Activated CD8-positive, alpha-beta memory T cell treated with anti-CD3 and anti-CD28 coated beads, Interleukin-2, amount 10 ng/mL, durations not matched to agents 7 days and 5 days (primary cell): ENCODE measurements at regions of chr19 and their contacts with region 1.

Region 1: GRCh38 chr19:4791170-4792018 is at the start of gene FEM1A:
- DNase-seq: peak; percentile 99
- ATAC-seq: peak; percentile 97
- H3K4me3 Mint-ChIP-seq: peak within 1 kb of the TSS; percentile 82
- H3K27ac Mint-ChIP-seq: peak within 1 kb of the TSS; percentile 87
- H3K4me1 Mint-ChIP-seq: peaks cover 35% of the 10 kb centered on the region
- H3K27me3 Mint-ChIP-seq: no peaks in the 10 kb centered on the region
- total RNA-seq, gene FEM1A: 11.5 to 16.8 TPM

Region 2: DNA sequence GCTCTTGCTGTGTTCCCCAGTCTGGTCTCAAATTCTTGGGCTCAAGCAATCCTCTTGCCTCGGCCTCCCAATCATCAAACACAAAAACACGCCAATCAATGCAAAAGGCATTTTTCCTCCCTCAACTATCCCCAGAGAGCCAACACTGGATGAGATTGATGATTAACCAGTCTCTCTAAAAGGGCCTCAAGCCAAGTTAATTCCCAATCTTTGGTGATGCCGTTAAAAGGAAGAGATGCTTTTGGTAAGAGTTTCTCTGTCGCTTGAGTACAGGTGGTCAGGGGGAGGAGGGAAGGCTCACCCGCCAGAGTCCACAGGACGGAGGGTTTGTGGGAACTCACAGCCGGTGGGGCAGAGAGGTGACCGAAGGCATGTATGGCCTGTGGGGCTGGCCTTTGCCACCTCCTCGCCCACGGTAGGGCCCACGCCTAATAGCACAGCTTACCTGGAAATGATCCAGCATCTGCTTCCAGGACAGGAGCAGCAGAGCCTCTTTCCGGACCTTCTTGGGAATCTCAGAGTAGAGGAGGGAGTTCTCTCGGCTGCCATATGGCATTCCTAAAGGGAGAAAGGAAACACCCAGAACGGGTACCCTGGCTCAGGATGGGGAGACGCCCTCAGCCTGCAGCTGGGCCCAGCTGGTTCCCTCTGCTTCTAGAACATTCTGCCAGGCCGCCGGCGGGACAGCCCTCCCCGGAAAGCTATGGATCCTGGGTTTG is 85.8 kb before region 1 on chr19:
- CTCF ChIA-PET with region 1: no interaction called
- DNase-seq: no peak
- ATAC-seq: no peak
- H3K4me3 Mint-ChIP-seq: no peak overlapping the region
- H3K27ac Mint-ChIP-seq: peak overlapping the region; percentile 12
- H3K4me1 Mint-ChIP-seq: peaks cover 19% of the 10 kb centered on the region
- H3K27me3 Mint-ChIP-seq: no peaks in the 10 kb centered on the region

Region 3: GRCh38 chr19:4723367-4724187 is 67.8 kb before region 1 on chr19 and contains the start of gene DPP9:
- CTCF ChIA-PET with region 1: interaction called, 74 read pairs
- DNase-seq: peak; percentile 99
- ATAC-seq: peak; percentile 95
- H3K4me3 Mint-ChIP-seq: peak within 1 kb of the TSS; percentile 100
- H3K27ac Mint-ChIP-seq: peak within 1 kb of the TSS; percentile 96
- H3K4me1 Mint-ChIP-seq: peaks cover 35% of the 10 kb centered on the region
- H3K27me3 Mint-ChIP-seq: no peaks in the 10 kb centered on the region
- total RNA-seq, gene DPP9: 92.5 to 98.0 TPM

Region 4: DNA sequence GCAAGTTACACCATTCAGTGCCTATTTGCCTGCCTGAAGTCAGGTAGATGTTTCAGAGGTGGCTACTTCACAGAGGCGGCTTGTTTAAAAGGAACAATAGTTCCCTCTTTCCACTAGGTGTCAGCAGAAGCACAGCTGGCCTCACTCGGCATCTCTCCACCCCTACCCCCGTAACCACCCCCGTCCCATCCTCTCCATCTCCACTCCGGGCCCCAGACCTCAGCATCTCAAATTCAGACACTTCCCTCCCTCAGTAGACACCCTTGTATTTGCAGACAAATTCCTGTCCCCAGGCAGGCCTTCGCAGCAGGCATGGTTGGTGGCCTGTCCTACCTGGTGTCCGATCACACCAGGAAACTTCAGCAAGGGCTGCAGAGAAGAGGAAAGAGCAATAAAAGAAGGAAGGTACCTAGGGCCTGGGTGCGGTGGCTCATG is 58.7 kb before region 1 on chr19:
- CTCF ChIA-PET with region 1: interaction called, 126 read pairs
- DNase-seq: peak; percentile 74
- ATAC-seq: peak; percentile 88
- H3K4me3 Mint-ChIP-seq: peak overlapping the region; percentile 31
- H3K27ac Mint-ChIP-seq: no peak overlapping the region
- H3K4me1 Mint-ChIP-seq: peaks cover 11% of the 10 kb centered on the region
- H3K27me3 Mint-ChIP-seq: no peaks in the 10 kb centered on the region

Region 5: GRCh38 chr19:4740092-4740491 is 51.3 kb before region 1 on chr19:
- CTCF ChIA-PET with region 1: interaction called, 126 read pairs
- DNase-seq: no peak
- ATAC-seq: no peak
- H3K4me3 Mint-ChIP-seq: no peak overlapping the region
- H3K27ac Mint-ChIP-seq: no peak overlapping the region
- H3K4me1 Mint-ChIP-seq: no peaks in the 10 kb centered on the region
- H3K27me3 Mint-ChIP-seq: peaks cover 6% of the 10 kb centered on the region

Region 6: DNA sequence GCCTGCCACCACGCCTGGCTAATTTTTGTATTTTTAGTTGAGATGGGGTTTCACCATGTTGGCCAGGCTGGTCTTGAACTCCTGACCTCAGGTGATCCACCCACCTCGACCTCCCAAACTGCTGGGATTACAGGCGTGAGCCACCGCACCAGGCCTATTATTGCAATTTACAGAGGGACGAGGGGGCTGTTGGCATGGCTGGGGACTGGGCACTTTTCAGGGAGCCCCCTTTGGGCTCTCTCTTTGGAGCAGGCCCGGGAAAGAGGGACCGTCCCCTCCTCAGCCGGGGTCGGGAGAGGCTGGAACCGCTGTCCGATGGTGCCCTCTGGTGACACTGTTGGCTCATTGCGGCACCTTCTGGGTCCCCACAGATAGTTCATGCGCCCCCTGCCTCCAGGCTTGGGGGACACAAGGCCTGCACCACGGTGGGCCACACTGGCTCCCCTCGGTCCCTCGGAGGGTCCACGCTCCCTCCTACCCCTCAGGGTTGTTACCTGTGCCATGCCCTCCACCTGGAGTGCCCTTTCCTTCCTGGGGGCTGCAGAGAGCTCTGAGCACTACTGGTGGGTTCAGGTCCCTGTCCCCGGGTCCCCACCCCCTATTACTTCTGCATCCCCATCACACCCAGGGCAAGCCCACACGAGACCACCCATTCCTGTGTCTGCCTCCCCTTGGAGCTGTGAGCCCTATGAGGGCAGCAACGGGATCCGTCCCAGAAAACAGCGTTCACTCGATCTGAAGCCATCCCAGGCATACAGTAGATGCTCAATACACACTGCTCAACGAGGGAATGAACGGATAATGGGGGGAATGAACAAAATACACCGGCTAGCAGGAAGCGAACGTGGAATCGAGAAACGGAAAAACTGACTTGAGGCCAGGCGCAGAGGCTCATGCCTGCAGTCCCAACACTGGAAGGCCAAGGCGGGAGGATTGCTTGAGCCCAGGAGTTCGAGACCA is 12.6 kb after region 1 on chr19:
- CTCF ChIA-PET with region 1: interaction called, 33 read pairs
- DNase-seq: peak; percentile 75
- ATAC-seq: peak; percentile 92
- H3K4me3 Mint-ChIP-seq: no peak overlapping the region
- H3K27ac Mint-ChIP-seq: no peak overlapping the region
- H3K4me1 Mint-ChIP-seq: no peaks in the 10 kb centered on the region
- H3K27me3 Mint-ChIP-seq: no peaks in the 10 kb centered on the region

Region 7: GRCh38 chr19:4817467-4818277 is 26.3 kb after region 1 on chr19:
- CTCF ChIA-PET with region 1: no interaction called
- DNase-seq: no peak
- ATAC-seq: no peak
- H3K4me3 Mint-ChIP-seq: no peak overlapping the region
- H3K27ac Mint-ChIP-seq: no peak overlapping the region
- H3K4me1 Mint-ChIP-seq: peaks cover 22% of the 10 kb centered on the region
- H3K27me3 Mint-ChIP-seq: no peaks in the 10 kb centered on the region

Region 8: DNA sequence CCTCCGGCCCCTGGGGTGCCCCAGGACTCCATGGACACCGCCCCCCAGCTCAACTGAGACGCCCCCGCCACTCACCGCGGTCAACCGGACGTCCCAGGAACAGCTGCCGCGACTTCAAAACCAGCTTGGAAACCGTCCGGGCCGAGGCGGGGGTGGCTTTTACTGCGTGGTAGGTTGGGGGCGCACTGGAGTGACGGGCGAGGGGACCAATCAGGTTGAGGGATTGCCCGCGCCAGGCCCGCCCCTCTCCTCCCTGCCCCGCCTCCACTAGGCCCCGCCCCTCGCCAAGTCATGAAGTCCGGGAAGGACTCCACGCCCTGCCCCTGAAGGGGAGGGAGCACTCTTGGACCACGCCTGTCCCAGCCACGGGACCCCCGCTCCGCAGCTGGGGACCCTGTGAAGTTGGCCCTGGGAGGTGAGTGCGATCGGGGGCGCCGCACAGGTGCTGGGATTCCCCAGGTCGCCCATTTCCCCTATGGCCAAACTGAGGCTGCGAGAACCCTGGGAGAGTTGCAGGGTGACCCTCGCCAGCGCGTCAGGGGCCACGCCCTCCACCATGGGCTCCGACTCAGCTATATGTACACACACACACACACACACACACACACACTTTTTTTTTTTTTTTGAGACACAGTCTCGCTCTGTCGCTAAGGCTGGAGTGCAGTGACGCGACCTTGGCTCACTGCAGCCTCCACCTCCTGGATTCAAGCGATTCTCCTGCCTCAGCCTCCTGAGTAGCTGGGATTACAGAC is 76.3 kb after region 1 on chr19 and contains the start of gene PLIN3:
- CTCF ChIA-PET with region 1: interaction called, 12 read pairs
- DNase-seq: peak; percentile 94
- ATAC-seq: peak; percentile 94
- H3K4me3 Mint-ChIP-seq: peak within 1 kb of the TSS; percentile 74
- H3K27ac Mint-ChIP-seq: peak within 1 kb of the TSS; percentile 65
- H3K4me1 Mint-ChIP-seq: peaks cover 19% of the 10 kb centered on the region
- H3K27me3 Mint-ChIP-seq: peaks cover 3% of the 10 kb centered on the region
- total RNA-seq, gene PLIN3: 29.0 to 32.4 TPM